ENCODE measurements at regions of chr2 and their contacts with region 1.

Region 1: GRCh38 chr2:32010670-32011484 is at the start of gene MEMO1:
- DNase-seq: peak; percentile 82 to 96 (median 91)
- ATAC-seq: peak; percentile 83
- H3K4me3 ChIP-seq: peak within 1 kb of the TSS; percentile 80
- H3K4me3 Mint-ChIP-seq: peak within 1 kb of the TSS; percentile 89
- H3K27ac ChIP-seq: peak within 1 kb of the TSS; percentile 69 to 74
- H3K27ac Mint-ChIP-seq: peak within 1 kb of the TSS; percentile 91
- H3K4me1 ChIP-seq: peaks cover 32% of the 10 kb centered on the region
- H3K4me1 Mint-ChIP-seq: peaks cover 53% of the 10 kb centered on the region
- H3K27me3 ChIP-seq: no peaks in the 10 kb centered on the region
- H3K27me3 Mint-ChIP-seq: no peaks in the 10 kb centered on the region
- CTCF ChIP-seq: no peak
- total RNA-seq, gene MEMO1: 39.6 to 39.8 TPM

Region 2: DNA sequence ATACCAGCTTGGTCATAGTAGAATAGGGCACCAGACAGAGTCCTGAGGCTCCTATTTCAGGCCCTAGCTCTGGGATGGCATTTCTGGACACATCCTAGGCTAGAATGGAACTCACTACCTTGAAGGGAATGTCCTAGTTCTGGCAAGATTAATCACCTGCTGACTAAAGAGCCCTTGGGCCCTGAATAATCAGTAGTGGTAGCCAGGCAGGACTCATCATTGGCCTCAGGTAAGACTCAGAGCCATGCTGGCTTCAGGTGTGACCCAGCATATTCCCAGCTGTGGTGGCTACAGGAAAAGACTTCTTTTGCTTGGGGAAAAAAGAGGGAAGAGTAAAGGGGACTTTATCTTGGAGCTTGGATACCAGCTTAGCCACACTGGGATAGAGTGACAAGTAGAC is 299.1 kb before region 1 on chr2:
- CTCF ChIA-PET with region 1: no interaction called
- POLR2A ChIA-PET with region 1: no interaction called
- intact Hi-C with region 1: no loop called
- DNase-seq: no peak
- ATAC-seq: no peak
- H3K4me3 ChIP-seq: no peak overlapping the region
- H3K4me3 Mint-ChIP-seq: no peak overlapping the region
- H3K27ac ChIP-seq: no peak overlapping the region
- H3K27ac Mint-ChIP-seq: no peak overlapping the region
- H3K4me1 ChIP-seq: no peaks in the 10 kb centered on the region
- H3K4me1 Mint-ChIP-seq: no peaks in the 10 kb centered on the region
- H3K27me3 ChIP-seq: peaks cover 0 to 2% of the 10 kb centered on the region in 2 experiments
- H3K27me3 Mint-ChIP-seq: peaks cover 3% of the 10 kb centered on the region
- CTCF ChIP-seq: no peak

Region 3: GRCh38 chr2:32039447-32040219 is 28.8 kb after region 1 on chr2 and contains the start of gene DPY30:
- CTCF ChIA-PET with region 1: interaction called, 3 read pairs
- POLR2A ChIA-PET with region 1: interaction called, 20 read pairs
- intact Hi-C with region 1: loop called in 1 of 2 experiments (anchors 2 kb)
- DNase-seq: peak; percentile 82 to 96 (median 88)
- ATAC-seq: peak; percentile 95
- H3K4me3 ChIP-seq: peak within 1 kb of the TSS; percentile 83
- H3K4me3 Mint-ChIP-seq: peak within 1 kb of the TSS; percentile 86
- H3K27ac ChIP-seq: peak within 1 kb of the TSS; percentile 55 to 79
- H3K27ac Mint-ChIP-seq: peak within 1 kb of the TSS; percentile 90
- H3K4me1 ChIP-seq: peaks cover 16% of the 10 kb centered on the region
- H3K4me1 Mint-ChIP-seq: peaks cover 24% of the 10 kb centered on the region
- H3K27me3 ChIP-seq: no peaks in the 10 kb centered on the region
- H3K27me3 Mint-ChIP-seq: no peaks in the 10 kb centered on the region
- CTCF ChIP-seq: no peak
- total RNA-seq, gene DPY30: 12.4 to 13.1 TPM

Region 4: DNA sequence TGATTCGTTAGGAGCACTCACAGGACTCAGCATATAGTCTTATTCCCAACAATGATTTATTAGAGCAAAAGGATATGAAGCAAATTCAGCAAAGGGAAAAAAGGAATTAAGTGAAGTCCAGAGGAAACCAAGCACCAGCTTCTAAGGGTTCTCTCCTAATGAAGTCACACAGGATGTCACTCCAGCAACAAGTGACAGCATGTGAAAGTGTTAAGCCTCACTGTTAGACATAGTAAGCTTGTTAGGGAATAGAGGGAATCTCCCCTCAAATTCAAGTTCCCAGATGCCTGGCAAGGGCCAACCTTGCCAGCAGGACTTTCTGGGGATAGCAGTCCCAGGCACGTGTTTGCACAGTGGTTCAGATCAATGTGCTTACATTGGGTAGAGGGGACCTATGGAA is 150.4 kb after region 1 on chr2:
- CTCF ChIA-PET with region 1: no interaction called
- POLR2A ChIA-PET with region 1: interaction called, 5 read pairs
- intact Hi-C with region 1: loop called (anchors 5 to 10 kb)
- DNase-seq: no peak
- ATAC-seq: no peak
- H3K4me3 ChIP-seq: no peak overlapping the region
- H3K4me3 Mint-ChIP-seq: peak overlapping the region; percentile 30
- H3K27ac ChIP-seq: no peak overlapping the region
- H3K27ac Mint-ChIP-seq: no peak overlapping the region
- H3K4me1 ChIP-seq: no peaks in the 10 kb centered on the region
- H3K4me1 Mint-ChIP-seq: peaks cover 18% of the 10 kb centered on the region
- H3K27me3 ChIP-seq: no peaks in the 10 kb centered on the region
- H3K27me3 Mint-ChIP-seq: no peaks in the 10 kb centered on the region
- CTCF ChIP-seq: no peak

Region 5: DNA sequence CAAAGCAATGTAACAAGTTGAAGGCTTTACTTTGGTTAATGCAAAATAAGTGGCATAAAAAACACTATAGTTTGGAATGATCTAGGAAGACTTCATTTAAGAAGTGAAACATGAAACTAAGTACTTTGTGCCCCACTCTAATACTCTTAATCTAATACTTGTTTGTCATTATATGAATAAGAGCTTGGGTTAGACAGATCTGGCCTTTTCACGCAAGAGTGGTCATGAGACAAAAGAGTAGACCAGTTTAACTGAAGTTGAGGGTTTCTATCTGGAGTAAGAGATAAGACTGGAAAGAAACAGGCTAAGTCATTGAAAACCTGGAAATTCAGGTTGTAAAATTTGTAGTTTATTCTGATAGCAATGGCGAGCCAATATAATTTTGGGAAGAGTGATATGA is 157.6 kb after region 1 on chr2:
- CTCF ChIA-PET with region 1: no interaction called
- POLR2A ChIA-PET with region 1: interaction called, 5 read pairs
- intact Hi-C with region 1: loop called (anchors 5 to 10 kb)
- DNase-seq: no peak
- ATAC-seq: no peak
- H3K4me3 ChIP-seq: no peak overlapping the region
- H3K4me3 Mint-ChIP-seq: peak overlapping the region; percentile 1
- H3K27ac ChIP-seq: no peak overlapping the region
- H3K27ac Mint-ChIP-seq: no peak overlapping the region
- H3K4me1 ChIP-seq: peaks cover 4% of the 10 kb centered on the region
- H3K4me1 Mint-ChIP-seq: peaks cover 56% of the 10 kb centered on the region
- H3K27me3 ChIP-seq: no peaks in the 10 kb centered on the region
- H3K27me3 Mint-ChIP-seq: no peaks in the 10 kb centered on the region
- CTCF ChIP-seq: no peak

Region 6: DNA sequence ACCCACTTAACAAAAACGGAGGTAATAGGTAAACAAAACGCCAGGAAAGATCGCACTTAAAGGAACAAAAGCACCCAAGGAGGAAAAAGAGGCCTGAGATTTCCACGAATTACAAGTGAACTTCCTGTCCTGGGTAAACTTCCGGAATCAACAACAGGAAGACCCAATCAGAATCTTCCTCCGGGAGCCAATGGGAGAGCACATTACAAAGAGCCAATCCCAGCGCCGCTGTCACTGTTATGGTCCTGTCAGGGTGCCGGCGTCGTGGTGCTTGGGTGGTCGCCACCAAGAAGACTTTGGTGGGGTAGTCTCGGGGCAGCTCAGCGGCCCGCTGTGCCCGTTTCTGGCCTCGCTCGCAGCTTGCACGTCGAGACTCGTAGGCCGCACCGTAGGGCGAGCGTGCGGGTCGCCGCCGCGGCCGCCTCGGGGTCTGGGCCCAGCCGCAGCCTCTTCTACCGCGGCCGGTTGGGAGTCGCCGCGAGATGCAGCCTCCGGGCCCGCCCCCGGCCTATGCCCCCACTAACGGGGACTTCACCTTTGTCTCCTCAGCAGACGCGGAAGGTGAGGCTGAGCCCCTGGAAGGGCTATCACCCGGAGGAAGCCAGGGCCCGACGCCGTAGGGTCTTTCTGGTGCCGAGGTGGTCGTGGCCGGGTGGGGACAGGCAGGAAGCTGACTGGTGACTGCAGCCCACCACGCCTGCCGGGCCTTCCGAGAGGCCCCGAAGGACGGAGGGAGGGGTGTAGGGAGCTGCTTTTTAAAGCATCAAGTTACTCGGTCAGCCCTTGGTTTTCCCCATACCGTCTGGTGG is 267.0 kb after region 1 on chr2 and contains the start of gene YIPF4:
- CTCF ChIA-PET with region 1: no interaction called
- POLR2A ChIA-PET with region 1: no interaction called
- intact Hi-C with region 1: loop called in 1 of 2 experiments (anchors 5 kb)
- DNase-seq: peak; percentile 79 to 94 (median 86)
- ATAC-seq: peak; percentile 98
- H3K4me3 ChIP-seq: peak within 1 kb of the TSS; percentile 85
- H3K4me3 Mint-ChIP-seq: peak within 1 kb of the TSS; percentile 97
- H3K27ac ChIP-seq: peak within 1 kb of the TSS; percentile 80 to 81
- H3K27ac Mint-ChIP-seq: peak within 1 kb of the TSS; percentile 99
- H3K4me1 ChIP-seq: peaks cover 36% of the 10 kb centered on the region
- H3K4me1 Mint-ChIP-seq: peaks cover 32% of the 10 kb centered on the region
- H3K27me3 ChIP-seq: no peaks in the 10 kb centered on the region
- H3K27me3 Mint-ChIP-seq: no peaks in the 10 kb centered on the region
- CTCF ChIP-seq: no peak
- total RNA-seq, gene YIPF4: 7.7 to 9.7 TPM

Measured in CD4-positive, alpha-beta T cell (primary cell).